IMR-90 (cell line): ENCODE measurements at regions of chr4 and their contacts with region 1.

Region 1: DNA sequence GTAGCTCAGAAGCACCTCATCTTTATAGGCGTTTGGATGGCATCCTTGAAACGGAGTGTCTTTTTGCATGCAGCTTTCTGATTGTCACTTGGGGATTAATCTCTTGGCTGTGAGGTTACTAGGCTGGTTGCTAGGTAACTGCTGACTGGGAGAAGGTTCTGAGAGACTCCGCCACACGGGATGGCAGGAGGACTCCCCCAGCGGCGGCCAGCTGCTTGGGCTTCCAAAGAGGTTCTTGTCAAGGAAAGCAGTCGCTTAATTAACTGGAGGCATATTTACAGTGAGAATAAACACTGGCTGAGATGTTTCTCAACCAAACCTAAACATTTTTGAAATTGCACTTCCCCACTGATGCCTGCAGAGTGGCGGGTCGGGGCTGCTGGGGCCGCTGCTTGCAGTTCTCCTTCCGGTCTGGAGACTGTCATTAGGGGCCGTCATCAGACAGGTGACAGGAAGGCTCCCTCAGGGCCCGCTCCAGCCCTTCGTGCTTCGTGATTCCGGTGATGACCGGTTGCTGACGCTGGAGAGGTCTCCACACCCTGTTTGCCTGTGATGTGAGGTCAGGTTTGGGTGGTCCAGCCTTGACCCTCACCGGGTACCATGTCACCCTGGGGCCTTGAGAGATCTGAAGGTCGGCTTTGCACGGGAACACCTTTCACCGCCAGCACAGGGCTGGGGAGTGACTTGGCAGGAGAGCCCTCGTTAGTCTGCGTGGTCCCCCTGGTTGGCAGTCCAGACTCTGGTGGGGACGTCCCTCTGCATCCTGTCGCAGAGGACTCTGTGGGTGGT is 9.1 kb downstream of the NSG1 start:
- DNase-seq: peak; percentile 53
- ATAC-seq: peak; percentile 72
- H3K4me3 ChIP-seq: no peak overlapping the region
- H3K27ac ChIP-seq: peak overlapping the region; percentile 74
- H3K4me1 ChIP-seq: peaks cover 29% of the 10 kb centered on the region
- H3K27me3 ChIP-seq: peaks cover 30% of the 10 kb centered on the region
- CTCF ChIP-seq: 0 out of 2 replicates have a peak, but pooled peaks have one; percentile 14
- POLR2A ChIP-seq: no peak
- RAD21 ChIP-seq: no peak

Region 2: DNA sequence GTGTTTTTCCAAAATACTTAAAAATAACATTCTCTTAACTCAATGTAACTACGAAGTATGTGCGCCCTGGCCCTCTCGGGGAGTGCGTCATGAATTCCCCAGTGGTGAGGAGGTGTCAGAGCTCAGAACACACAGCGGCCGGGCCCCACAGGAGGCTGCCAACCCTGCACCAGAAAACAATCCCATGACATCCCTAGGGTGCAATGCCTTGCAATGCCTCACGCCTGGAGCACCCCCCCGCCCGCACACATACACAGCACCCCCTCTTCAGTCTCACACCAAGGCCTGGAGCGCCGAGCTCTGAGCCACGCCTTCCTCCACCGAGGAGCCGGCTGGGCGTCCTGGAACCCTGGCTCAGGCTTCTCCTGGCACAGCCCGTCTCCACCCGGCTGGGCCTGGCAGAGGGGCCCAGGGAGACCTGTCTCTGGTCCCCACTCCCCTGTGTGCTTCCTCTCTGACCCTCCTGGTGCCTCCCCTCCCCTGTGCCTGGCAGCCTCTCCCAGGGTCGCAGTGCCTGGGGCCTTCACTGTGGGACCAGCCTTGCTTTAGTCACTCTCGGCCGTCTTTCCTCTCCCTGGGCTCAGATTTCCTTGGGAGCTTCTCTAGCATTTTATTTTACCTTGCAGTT is 738.0 kb before region 1 on chr4:
- CTCF ChIA-PET with region 1: no interaction called
- POLR2A ChIA-PET with region 1: no interaction called
- dilution Hi-C with region 1: no loop called
- in situ Hi-C with region 1: no loop called
- intact Hi-C with region 1: no loop called
- DNase-seq: peak; percentile 90
- ATAC-seq: peak; percentile 97
- H3K4me3 ChIP-seq: no peak overlapping the region
- H3K27ac ChIP-seq: peak overlapping the region; percentile 4; the same call in 1 of the 2 replicates
- H3K4me1 ChIP-seq: peaks cover 8% of the 10 kb centered on the region; the same call in 1 of the 2 replicates
- H3K27me3 ChIP-seq: peaks cover 55% of the 10 kb centered on the region
- CTCF ChIP-seq: no peak
- POLR2A ChIP-seq: no peak
- RAD21 ChIP-seq: no peak; the same call in 1 of the 2 replicates

Region 3: GRCh38 chr4:4377732-4378460 is 18.1 kb before region 1 on chr4:
- CTCF ChIA-PET with region 1: interaction called, 3 read pairs
- POLR2A ChIA-PET with region 1: interaction called, 20 read pairs
- dilution Hi-C with region 1: no loop called
- in situ Hi-C with region 1: no loop called
- intact Hi-C with region 1: no loop called
- DNase-seq: no peak
- ATAC-seq: no peak
- H3K4me3 ChIP-seq: no peak overlapping the region
- H3K27ac ChIP-seq: no peak overlapping the region
- H3K4me1 ChIP-seq: no peaks in the 10 kb centered on the region
- H3K27me3 ChIP-seq: peaks cover 60% of the 10 kb centered on the region
- CTCF ChIP-seq: no peak
- POLR2A ChIP-seq: no peak
- RAD21 ChIP-seq: no peak

Region 4: GRCh38 chr4:4519297-4519894 is 123.4 kb after region 1 on chr4:
- CTCF ChIA-PET with region 1: no interaction called
- POLR2A ChIA-PET with region 1: no interaction called
- dilution Hi-C with region 1: no loop called
- in situ Hi-C with region 1: no loop called
- intact Hi-C with region 1: no loop called
- DNase-seq: peak; percentile 33
- ATAC-seq: peak; percentile 72; the same call in 1 of the 2 replicates
- H3K4me3 ChIP-seq: no peak overlapping the region
- H3K27ac ChIP-seq: no peak overlapping the region
- H3K4me1 ChIP-seq: no peaks in the 10 kb centered on the region
- H3K27me3 ChIP-seq: no peaks in the 10 kb centered on the region
- CTCF ChIP-seq: peak; percentile 59
- POLR2A ChIP-seq: no peak
- RAD21 ChIP-seq: peak; percentile 51